ENCODE measurements at regions of chr19 and their contacts with region 1.

Region 1: DNA sequence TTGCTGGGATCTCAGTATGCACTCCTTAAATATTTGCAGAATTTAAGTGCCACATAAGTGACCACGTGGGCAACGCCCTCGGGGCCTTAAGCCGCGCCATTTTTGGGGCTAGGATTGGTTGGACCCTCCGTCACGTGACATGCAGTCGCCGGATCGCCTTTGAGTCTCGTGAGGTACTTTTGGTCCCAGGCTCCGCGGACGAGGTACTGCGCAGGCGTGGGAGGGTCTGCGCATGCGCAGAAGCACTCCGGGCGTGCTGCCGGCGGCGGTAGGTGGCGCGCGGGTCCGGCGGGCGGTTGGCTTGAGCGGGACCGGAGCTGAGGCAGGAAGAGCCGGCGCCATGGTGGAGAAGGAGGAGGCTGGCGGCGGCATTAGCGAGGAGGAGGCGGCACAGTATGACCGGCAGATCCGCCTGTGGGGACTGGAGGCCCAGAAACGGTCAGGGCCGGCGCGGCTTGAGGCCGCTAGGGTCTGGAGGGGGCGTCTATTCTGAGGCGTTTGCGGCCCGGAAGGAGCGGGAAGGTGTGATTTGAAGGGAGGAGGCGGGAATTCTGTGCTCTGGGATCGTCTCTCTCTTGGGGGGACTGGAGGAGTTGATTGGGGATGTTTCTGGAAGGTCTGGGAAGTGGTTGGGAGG is at the start of gene SAE1:
- DNase-seq: peak; percentile 94
- H3K4me3 Mint-ChIP-seq: peak within 1 kb of the TSS; percentile 97
- H3K27ac Mint-ChIP-seq: peak within 1 kb of the TSS; percentile 90
- H3K4me1 Mint-ChIP-seq: peaks cover 47% of the 10 kb centered on the region
- H3K27me3 Mint-ChIP-seq: no peaks in the 10 kb centered on the region
- total RNA-seq, gene SAE1: 150 TPM

Region 2: DNA sequence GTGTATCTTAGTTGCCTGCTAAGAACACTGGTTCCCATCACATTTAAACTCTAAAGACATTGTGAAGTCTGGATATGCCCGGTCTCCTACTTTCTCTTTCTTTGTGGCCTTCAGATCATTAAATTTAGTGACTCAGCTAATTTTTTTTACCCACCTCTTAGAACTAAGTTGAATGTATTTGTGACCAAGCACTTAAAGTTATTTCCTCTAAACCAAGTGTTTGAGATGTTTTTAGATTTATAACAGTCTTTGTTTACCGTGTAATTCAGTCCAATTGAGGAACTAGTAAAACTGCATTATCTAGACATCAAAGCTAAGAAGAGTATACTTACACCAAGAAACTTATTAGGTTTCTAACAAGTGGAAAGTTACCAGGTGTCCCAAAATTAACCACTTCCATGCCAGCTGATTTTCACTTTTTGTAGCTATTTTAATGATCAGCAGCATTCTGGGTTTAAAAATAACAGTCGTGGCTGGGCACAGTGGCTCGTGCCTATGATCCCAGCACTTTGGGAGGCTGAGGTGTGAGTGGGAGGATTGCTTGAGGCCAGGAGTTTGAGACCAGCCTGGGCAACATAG is 216.8 kb before region 1 on chr19:
- CTCF ChIA-PET with region 1: no interaction called
- POLR2A ChIA-PET with region 1: no interaction called
- DNase-seq: no peak
- H3K4me3 Mint-ChIP-seq: no peak overlapping the region
- H3K27ac Mint-ChIP-seq: no peak overlapping the region
- H3K4me1 Mint-ChIP-seq: peaks cover 52% of the 10 kb centered on the region
- H3K27me3 Mint-ChIP-seq: no peaks in the 10 kb centered on the region

Region 3: GRCh38 chr19:47047763-47048405 is 82.8 kb before region 1 on chr19:
- CTCF ChIA-PET with region 1: interaction called, 3 read pairs
- POLR2A ChIA-PET with region 1: interaction called, 10 read pairs
- DNase-seq: peak; percentile 86
- H3K4me3 Mint-ChIP-seq: peak overlapping the region; percentile 99
- H3K27ac Mint-ChIP-seq: peak overlapping the region; percentile 92
- H3K4me1 Mint-ChIP-seq: peaks cover 19% of the 10 kb centered on the region
- H3K27me3 Mint-ChIP-seq: no peaks in the 10 kb centered on the region

Region 4: DNA sequence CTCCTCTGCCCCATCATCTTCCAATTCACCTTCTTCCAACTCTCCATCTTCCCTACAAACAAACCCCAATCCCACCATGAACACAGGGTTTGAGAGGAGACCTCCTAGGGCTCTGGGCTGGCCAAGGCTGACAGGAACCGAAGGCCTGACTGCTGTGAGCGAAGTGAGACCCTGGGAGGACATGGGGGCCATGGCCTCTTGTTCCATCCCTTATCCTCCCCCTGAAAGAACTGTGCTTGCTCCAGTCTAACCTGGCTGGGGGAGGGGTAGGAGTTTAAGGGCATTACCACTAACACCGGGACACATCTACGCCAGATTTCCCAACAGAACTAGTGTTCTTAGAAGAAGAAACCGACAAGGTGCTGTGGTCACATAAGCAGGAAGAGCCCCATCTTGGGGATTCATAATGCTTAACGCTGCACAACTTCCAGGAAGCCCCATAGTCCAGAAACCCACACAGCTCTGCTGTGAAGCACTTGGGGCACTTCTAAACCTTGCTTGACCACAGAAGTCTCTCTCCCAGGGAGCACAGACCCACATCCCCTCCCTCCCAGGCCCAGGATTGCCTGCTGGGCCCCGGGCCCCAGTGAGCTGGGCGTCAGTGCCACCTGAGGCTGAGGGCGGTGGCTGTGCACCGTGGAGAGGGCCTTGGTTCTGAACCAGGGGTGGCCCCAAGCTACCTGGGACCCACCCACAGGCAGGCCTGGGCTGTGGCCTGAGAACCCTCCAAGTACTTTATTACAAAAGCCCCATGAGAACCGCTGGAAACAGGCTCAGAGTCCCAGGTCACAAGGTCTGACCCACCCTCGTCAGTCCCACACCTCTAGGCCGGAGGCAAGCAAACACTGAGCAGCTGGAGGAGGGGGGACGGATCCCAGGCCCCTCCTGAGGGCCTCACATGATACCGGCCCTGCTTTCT is 35.9 kb before region 1 on chr19:
- CTCF ChIA-PET with region 1: interaction called, 6 read pairs
- POLR2A ChIA-PET with region 1: interaction called, 43 read pairs
- DNase-seq: peak; percentile 74
- H3K4me3 Mint-ChIP-seq: peak overlapping the region; percentile 79
- H3K27ac Mint-ChIP-seq: peak overlapping the region; percentile 91
- H3K4me1 Mint-ChIP-seq: peaks cover 83% of the 10 kb centered on the region
- H3K27me3 Mint-ChIP-seq: no peaks in the 10 kb centered on the region

Region 5: GRCh38 chr19:47143322-47144073 is 12.8 kb after region 1 on chr19:
- CTCF ChIA-PET with region 1: interaction called, 15 read pairs
- POLR2A ChIA-PET with region 1: interaction called, 46 read pairs
- DNase-seq: no peak
- H3K4me3 Mint-ChIP-seq: no peak overlapping the region
- H3K27ac Mint-ChIP-seq: peak overlapping the region; percentile 21
- H3K4me1 Mint-ChIP-seq: peaks cover 55% of the 10 kb centered on the region
- H3K27me3 Mint-ChIP-seq: no peaks in the 10 kb centered on the region

Region 6: GRCh38 chr19:47157431-47158321 is 27.0 kb after region 1 on chr19:
- CTCF ChIA-PET with region 1: interaction called, 6 read pairs
- POLR2A ChIA-PET with region 1: interaction called, 20 read pairs
- DNase-seq: peak; percentile 49
- H3K4me3 Mint-ChIP-seq: peak overlapping the region; percentile 0
- H3K27ac Mint-ChIP-seq: peak overlapping the region; percentile 85
- H3K4me1 Mint-ChIP-seq: peaks cover 51% of the 10 kb centered on the region
- H3K27me3 Mint-ChIP-seq: no peaks in the 10 kb centered on the region

Region 7: GRCh38 chr19:47210689-47211316 is 80.1 kb after region 1 on chr19:
- CTCF ChIA-PET with region 1: interaction called, 10 read pairs
- POLR2A ChIA-PET with region 1: interaction called, 4 read pairs
- DNase-seq: peak; percentile 84
- H3K4me3 Mint-ChIP-seq: no peak overlapping the region
- H3K27ac Mint-ChIP-seq: peak overlapping the region; percentile 72
- H3K4me1 Mint-ChIP-seq: peaks cover 16% of the 10 kb centered on the region
- H3K27me3 Mint-ChIP-seq: no peaks in the 10 kb centered on the region

Region 8: GRCh38 chr19:47256688-47257443 is 126.2 kb after region 1 on chr19:
- CTCF ChIA-PET with region 1: no interaction called
- POLR2A ChIA-PET with region 1: interaction called, 11 read pairs
- DNase-seq: peak; percentile 100
- H3K4me3 Mint-ChIP-seq: peak overlapping the region; percentile 85
- H3K27ac Mint-ChIP-seq: peak overlapping the region; percentile 85
- H3K4me1 Mint-ChIP-seq: peaks cover 40% of the 10 kb centered on the region
- H3K27me3 Mint-ChIP-seq: no peaks in the 10 kb centered on the region

Measured in activated CD4-positive, alpha-beta memory T cell treated with anti-CD3 and anti-CD28 coated beads, Interleukin-2, amount 10 ng/mL, durations not matched to agents 7 days and 5 days (primary cell).